Activated CD4-positive, alpha-beta T cell treated with anti-CD3 and anti-CD28 coated beads for 36 hours (primary cell): ENCODE measurements at regions of chr6 and their contacts with region 1.

Region 1: GRCh38 chr6:42569102-42570028 is 5.5 kb downstream of the UBR2 start:
- DNase-seq: no peak
- ATAC-seq: peak; percentile 66
- H3K4me3 Mint-ChIP-seq: no peak overlapping the region
- H3K27ac Mint-ChIP-seq: peak overlapping the region; percentile 79
- H3K4me1 Mint-ChIP-seq: peaks cover 57% of the 10 kb centered on the region
- H3K27me3 Mint-ChIP-seq: no peaks in the 10 kb centered on the region

Region 2: GRCh38 chr6:42604150-42604549 is 34.8 kb after region 1 on chr6:
- CTCF ChIA-PET with region 1: interaction called, 3 read pairs
- POLR2A ChIA-PET with region 1: no interaction called
- intact Hi-C with region 1: loop called in 1 of 2 experiments (anchors 5 kb)
- DNase-seq: no peak
- ATAC-seq: peak; percentile 49
- H3K4me3 Mint-ChIP-seq: no peak overlapping the region
- H3K27ac Mint-ChIP-seq: no peak overlapping the region
- H3K4me1 Mint-ChIP-seq: peaks cover 5% of the 10 kb centered on the region
- H3K27me3 Mint-ChIP-seq: no peaks in the 10 kb centered on the region

Region 3: DNA sequence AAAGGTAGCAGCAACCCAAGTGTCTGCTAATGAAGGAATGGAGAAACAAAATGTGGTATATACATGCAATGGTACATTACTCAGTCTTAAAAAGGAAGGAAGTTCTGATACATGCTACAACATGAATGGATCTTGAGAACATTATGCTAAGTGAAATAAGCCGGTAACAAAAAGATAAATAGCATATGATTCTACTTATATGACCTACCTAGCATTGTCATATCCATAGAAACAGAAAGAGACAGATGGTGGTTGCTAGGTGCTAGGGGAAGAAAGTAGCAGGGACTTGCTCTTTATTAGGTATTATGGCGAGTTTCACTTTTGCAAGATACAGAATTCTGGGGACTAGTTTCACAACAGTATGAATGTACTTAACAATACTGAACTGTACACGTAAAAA is 41.1 kb after region 1 on chr6:
- CTCF ChIA-PET with region 1: interaction called, 3 read pairs
- POLR2A ChIA-PET with region 1: no interaction called
- intact Hi-C with region 1: loop called in 1 of 2 experiments (anchors 2 kb)
- DNase-seq: no peak
- ATAC-seq: peak; percentile 94
- H3K4me3 Mint-ChIP-seq: no peak overlapping the region
- H3K27ac Mint-ChIP-seq: peak overlapping the region; percentile 49
- H3K4me1 Mint-ChIP-seq: peaks cover 10% of the 10 kb centered on the region
- H3K27me3 Mint-ChIP-seq: no peaks in the 10 kb centered on the region